Caco-2 (cell line): ENCODE measurements at regions of chr1 and their contacts with region 1.

Region 1: GRCh38 chr1:173202430-173203145 is 4.5 kb downstream of the TNFSF4 start:
- DNase-seq: peak in 1 of 2 experiments; percentile 53
- H3K4me3 ChIP-seq: no peak overlapping the region
- H3K4me3 Mint-ChIP-seq: no peak overlapping the region
- H3K27ac Mint-ChIP-seq: no peak overlapping the region
- H3K4me1 ChIP-seq: no peaks in the 10 kb centered on the region
- H3K4me1 Mint-ChIP-seq: no peaks in the 10 kb centered on the region
- H3K27me3 ChIP-seq: no peaks in the 10 kb centered on the region
- H3K27me3 Mint-ChIP-seq: no peaks in the 10 kb centered on the region
- CTCF ChIP-seq: peak; percentile 65 to 66

Region 2: GRCh38 chr1:172976222-172977041 is 226.2 kb before region 1 on chr1:
- CTCF ChIA-PET with region 1: interaction called, 16 read pairs
- POLR2A ChIA-PET with region 1: no interaction called
- intact Hi-C with region 1: no loop called
- DNase-seq: peak; percentile 67 to 71
- H3K4me3 ChIP-seq: no peak overlapping the region
- H3K4me3 Mint-ChIP-seq: peak overlapping the region; percentile 15
- H3K27ac Mint-ChIP-seq: peak overlapping the region; percentile 64
- H3K4me1 ChIP-seq: peaks cover 31% of the 10 kb centered on the region
- H3K4me1 Mint-ChIP-seq: peaks cover 35% of the 10 kb centered on the region
- H3K27me3 ChIP-seq: no peaks in the 10 kb centered on the region
- H3K27me3 Mint-ChIP-seq: no peaks in the 10 kb centered on the region
- CTCF ChIP-seq: no peak

Region 3: GRCh38 chr1:173050865-173051264 is 151.7 kb before region 1 on chr1 and contains the start of gene TNFSF18:
- CTCF ChIA-PET with region 1: no interaction called
- POLR2A ChIA-PET with region 1: no interaction called
- intact Hi-C with region 1: loop called (anchors 5 kb)
- DNase-seq: no peak
- H3K4me3 ChIP-seq: no peak within 1 kb of the TSS
- H3K4me3 Mint-ChIP-seq: no peak within 1 kb of the TSS
- H3K27ac Mint-ChIP-seq: no peak within 1 kb of the TSS
- H3K4me1 ChIP-seq: no peaks in the 10 kb centered on the region; the same call in 1 of the 2 replicates
- H3K4me1 Mint-ChIP-seq: no peaks in the 10 kb centered on the region
- H3K27me3 ChIP-seq: no peaks in the 10 kb centered on the region
- H3K27me3 Mint-ChIP-seq: no peaks in the 10 kb centered on the region
- CTCF ChIP-seq: no peak
- total RNA-seq, gene TNFSF18: not detected in 2 replicates

Region 4: GRCh38 chr1:173122958-173123852 is 79.4 kb before region 1 on chr1:
- CTCF ChIA-PET with region 1: no interaction called
- POLR2A ChIA-PET with region 1: no interaction called
- intact Hi-C with region 1: loop called (anchors 5 kb)
- DNase-seq: peak; percentile 82 to 91
- H3K4me3 ChIP-seq: no peak overlapping the region
- H3K4me3 Mint-ChIP-seq: peak overlapping the region; percentile 66
- H3K27ac Mint-ChIP-seq: peak overlapping the region; percentile 93
- H3K4me1 ChIP-seq: peaks cover 51% of the 10 kb centered on the region
- H3K4me1 Mint-ChIP-seq: peaks cover 53% of the 10 kb centered on the region
- H3K27me3 ChIP-seq: no peaks in the 10 kb centered on the region
- H3K27me3 Mint-ChIP-seq: no peaks in the 10 kb centered on the region
- CTCF ChIP-seq: no peak

Region 5: DNA sequence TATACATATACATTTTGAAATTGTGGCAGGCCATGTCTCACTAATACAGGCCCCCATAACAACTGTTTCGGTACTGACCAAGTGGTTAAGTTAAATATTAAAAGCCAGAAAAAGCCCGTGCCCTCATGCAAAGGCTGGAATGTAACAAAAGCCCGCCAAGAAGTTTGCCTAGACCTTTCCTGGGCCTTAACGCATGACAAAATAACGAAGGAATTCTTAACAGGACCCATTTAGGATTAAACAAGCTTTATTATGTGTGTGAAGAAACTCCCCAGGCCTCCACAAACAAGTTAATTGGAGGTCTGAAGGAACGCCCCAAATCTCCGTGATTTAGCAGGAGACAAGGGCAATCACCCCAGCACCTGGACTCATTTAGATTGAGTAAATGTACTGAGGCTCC is 37.9 kb before region 1 on chr1:
- CTCF ChIA-PET with region 1: no interaction called
- POLR2A ChIA-PET with region 1: no interaction called
- intact Hi-C with region 1: no loop called
- DNase-seq: no peak
- H3K4me3 ChIP-seq: no peak overlapping the region
- H3K4me3 Mint-ChIP-seq: no peak overlapping the region
- H3K27ac Mint-ChIP-seq: no peak overlapping the region
- H3K4me1 ChIP-seq: no peaks in the 10 kb centered on the region; the same call in 1 of the 2 replicates
- H3K4me1 Mint-ChIP-seq: no peaks in the 10 kb centered on the region
- H3K27me3 ChIP-seq: no peaks in the 10 kb centered on the region
- H3K27me3 Mint-ChIP-seq: no peaks in the 10 kb centered on the region
- CTCF ChIP-seq: no peak

Region 6: GRCh38 chr1:173234899-173235298 is 32.3 kb after region 1 on chr1:
- CTCF ChIA-PET with region 1: no interaction called
- POLR2A ChIA-PET with region 1: no interaction called
- intact Hi-C with region 1: no loop called
- DNase-seq: no peak
- H3K4me3 ChIP-seq: no peak overlapping the region
- H3K4me3 Mint-ChIP-seq: no peak overlapping the region
- H3K27ac Mint-ChIP-seq: no peak overlapping the region
- H3K4me1 ChIP-seq: no peaks in the 10 kb centered on the region
- H3K4me1 Mint-ChIP-seq: no peaks in the 10 kb centered on the region
- H3K27me3 ChIP-seq: no peaks in the 10 kb centered on the region
- H3K27me3 Mint-ChIP-seq: no peaks in the 10 kb centered on the region
- CTCF ChIP-seq: no peak